Breast epithelium (tissue), 4 donors: ENCODE measurements at regions of chrX and their contacts with region 1.

Region 1: GRCh38 chrX:139930916-139931645 is 1.8 kb downstream of the ATP11C start:
- DNase-seq: no peak
- H3K4me3 ChIP-seq: peak overlapping the region; percentile 73 to 80 (median 79)
- H3K27ac ChIP-seq: peak overlapping the region in 1 of 2 donors; percentile 96
- H3K4me1 ChIP-seq: no peaks in the 10 kb centered on the region
- H3K27me3 ChIP-seq: peaks cover 0 to 26% of the 10 kb centered on the region in 2 donors
- CTCF ChIP-seq: no peak
- POLR2A ChIP-seq: no peak

Region 2: DNA sequence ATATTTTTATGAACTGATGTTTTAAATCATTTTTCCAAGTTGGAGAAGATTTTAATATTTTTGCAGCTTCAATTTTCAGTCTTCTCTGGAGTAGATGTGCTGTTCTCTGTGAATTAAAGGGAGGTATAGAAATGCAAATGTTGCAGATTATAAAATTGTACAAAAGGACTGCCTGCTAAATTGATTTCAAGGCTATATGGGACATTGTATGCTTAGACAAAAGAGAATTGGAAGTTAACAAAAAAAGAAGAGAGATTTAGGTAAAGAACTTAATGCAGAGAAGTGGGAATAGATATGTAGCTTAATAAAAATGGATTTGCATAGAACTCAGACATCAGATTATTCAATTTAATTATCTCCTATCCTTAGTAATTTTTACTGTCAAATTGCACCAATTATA is 1961.9 kb before region 1 on chrX:
- intact Hi-C with region 1: no loop called
- DNase-seq: no peak
- H3K4me3 ChIP-seq: no peak overlapping the region
- H3K27ac ChIP-seq: no peak overlapping the region
- H3K4me1 ChIP-seq: no peaks in the 10 kb centered on the region
- H3K27me3 ChIP-seq: peaks cover 0 to 7% of the 10 kb centered on the region in 2 donors
- CTCF ChIP-seq: no peak
- POLR2A ChIP-seq: no peak

Region 3: DNA sequence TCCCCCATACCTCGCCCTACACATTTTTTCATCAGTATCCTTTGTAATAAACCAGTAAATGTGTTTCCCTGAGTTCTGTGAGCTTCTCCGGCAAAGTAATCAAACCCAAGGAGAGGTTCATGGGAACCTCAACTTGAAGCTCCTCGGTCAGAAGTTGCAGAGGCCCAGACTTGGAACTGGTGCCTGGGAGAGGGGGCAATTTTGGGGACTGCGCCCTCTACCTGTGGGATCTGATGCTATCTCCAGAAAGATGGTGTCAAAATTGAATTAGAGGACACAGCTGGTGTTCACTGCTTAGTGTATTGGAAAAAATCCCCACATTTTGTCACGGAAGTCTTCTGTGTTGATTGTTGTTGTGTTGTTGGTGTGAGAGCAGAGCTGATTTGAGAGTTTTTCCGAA is 68.9 kb before region 1 on chrX:
- intact Hi-C with region 1: loop called (anchors 2 kb)
- DNase-seq: no peak
- H3K4me3 ChIP-seq: no peak overlapping the region
- H3K27ac ChIP-seq: no peak overlapping the region
- H3K4me1 ChIP-seq: no peaks in the 10 kb centered on the region
- H3K27me3 ChIP-seq: peaks cover 0 to 6% of the 10 kb centered on the region in 2 donors
- CTCF ChIP-seq: no peak
- POLR2A ChIP-seq: no peak

Region 4: DNA sequence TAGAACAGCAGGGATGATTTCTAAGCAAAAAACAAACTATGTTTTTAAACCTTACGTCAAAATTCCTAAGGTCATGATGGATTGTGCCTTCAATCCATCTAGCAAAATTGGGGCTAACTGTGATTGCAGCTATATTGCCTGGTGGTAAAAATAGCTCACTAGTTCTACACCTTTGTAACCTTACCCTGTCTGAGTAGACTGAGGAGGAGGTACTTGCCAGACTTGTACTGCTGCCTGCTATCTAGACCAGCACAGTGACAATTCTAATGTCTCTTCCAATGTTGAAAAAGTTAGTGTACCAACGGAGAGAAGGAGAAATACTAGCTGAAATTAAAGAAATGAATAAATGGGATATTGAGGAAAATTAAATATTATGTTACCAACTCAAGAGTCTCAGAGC is 28.5 kb before region 1 on chrX:
- intact Hi-C with region 1: no loop called
- DNase-seq: no peak
- H3K4me3 ChIP-seq: no peak overlapping the region
- H3K27ac ChIP-seq: no peak overlapping the region
- H3K4me1 ChIP-seq: no peaks in the 10 kb centered on the region
- H3K27me3 ChIP-seq: peaks cover 0 to 6% of the 10 kb centered on the region in 2 donors
- CTCF ChIP-seq: no peak
- POLR2A ChIP-seq: no peak

Region 5: GRCh38 chrX:139967300-139967699 is 36.2 kb after region 1 on chrX:
- intact Hi-C with region 1: no loop called
- DNase-seq: no peak
- H3K4me3 ChIP-seq: no peak overlapping the region
- H3K27ac ChIP-seq: no peak overlapping the region
- H3K4me1 ChIP-seq: no peaks in the 10 kb centered on the region
- H3K27me3 ChIP-seq: peaks cover 0 to 29% of the 10 kb centered on the region in 2 donors
- CTCF ChIP-seq: no peak
- POLR2A ChIP-seq: no peak